IMR-90 (cell line): ENCODE measurements at regions of chr7 and their contacts with region 1.

Region 1: DNA sequence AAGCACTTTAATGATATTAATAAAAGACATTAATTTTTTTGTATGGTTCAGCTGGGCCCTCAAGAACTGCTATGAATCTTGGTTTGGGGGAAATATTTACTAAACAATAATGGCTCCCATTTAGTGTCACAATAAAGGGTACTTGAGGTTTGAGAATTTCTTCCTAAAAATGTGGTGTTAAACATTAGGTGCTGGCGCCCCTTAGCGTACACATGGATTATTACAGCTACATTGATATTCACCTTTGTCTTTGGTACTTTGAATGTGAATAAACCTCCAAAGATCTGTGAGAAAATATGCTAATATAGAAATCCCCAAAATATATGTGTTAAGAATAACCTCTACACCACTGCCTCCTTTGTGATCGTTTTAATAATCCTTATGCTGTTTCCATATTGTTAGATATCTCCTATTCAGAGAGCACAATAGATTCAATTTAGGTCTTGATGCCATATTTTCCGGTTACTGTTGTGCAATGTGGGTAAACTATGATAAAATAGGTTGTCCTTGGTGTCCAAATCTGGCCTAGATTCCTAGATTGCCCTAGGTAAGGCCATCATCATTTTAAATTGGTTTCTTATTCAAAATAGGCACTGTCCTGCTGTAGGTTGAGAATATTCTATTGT is 161.8 kb upstream of the CACNA2D1 start:
- DNase-seq: peak; percentile 46
- ATAC-seq: peak; percentile 80
- H3K4me3 ChIP-seq: no peak overlapping the region
- H3K27ac ChIP-seq: no peak overlapping the region
- H3K4me1 ChIP-seq: no peaks in the 10 kb centered on the region
- H3K27me3 ChIP-seq: no peaks in the 10 kb centered on the region
- CTCF ChIP-seq: peak; percentile 81
- POLR2A ChIP-seq: no peak
- RAD21 ChIP-seq: peak; percentile 81

Region 2: GRCh38 chr7:81482600-81483186 is 1122.7 kb before region 1 on chr7:
- CTCF ChIA-PET with region 1: no interaction called
- POLR2A ChIA-PET with region 1: no interaction called
- dilution Hi-C with region 1: no loop called
- in situ Hi-C with region 1: loop called (anchors 5 kb)
- intact Hi-C with region 1: loop called (anchors 5 kb)
- DNase-seq: peak; percentile 65
- ATAC-seq: peak; percentile 50
- H3K4me3 ChIP-seq: no peak overlapping the region
- H3K27ac ChIP-seq: no peak overlapping the region
- H3K4me1 ChIP-seq: peaks cover 3% of the 10 kb centered on the region
- H3K27me3 ChIP-seq: no peaks in the 10 kb centered on the region
- CTCF ChIP-seq: peak; percentile 62
- POLR2A ChIP-seq: no peak
- RAD21 ChIP-seq: peak; percentile 67